Right cardiac atrium (tissue), 5 donors: ENCODE measurements at regions of chr18 and their contacts with region 1.

Region 1: GRCh38 chr18:73218293-73218692 is 350.5 kb upstream of the NETO1 start:
- DNase-seq: no peak
- ATAC-seq: no peak
- H3K4me3 ChIP-seq: no peak overlapping the region
- H3K27ac ChIP-seq: no peak overlapping the region
- H3K4me1 ChIP-seq: no peaks in the 10 kb centered on the region
- H3K27me3 ChIP-seq: no peaks in the 10 kb centered on the region

Region 2: GRCh38 chr18:72720116-72720515 is 498.2 kb before region 1 on chr18:
- intact Hi-C with region 1: loop called in 1 of 4 experiments (anchors 5 kb)
- DNase-seq: no peak
- ATAC-seq: no peak
- H3K4me3 ChIP-seq: no peak overlapping the region
- H3K27ac ChIP-seq: no peak overlapping the region
- H3K4me1 ChIP-seq: no peaks in the 10 kb centered on the region
- H3K27me3 ChIP-seq: no peaks in the 10 kb centered on the region

Region 3: GRCh38 chr18:73201940-73202339 is 16.4 kb before region 1 on chr18:
- intact Hi-C with region 1: loop called in 1 of 4 experiments (anchors 2 kb)
- DNase-seq: no peak
- ATAC-seq: no peak
- H3K4me3 ChIP-seq: no peak overlapping the region
- H3K27ac ChIP-seq: no peak overlapping the region
- H3K4me1 ChIP-seq: no peaks in the 10 kb centered on the region
- H3K27me3 ChIP-seq: no peaks in the 10 kb centered on the region